Activated CD4-positive, alpha-beta T cell treated with anti-CD3 and anti-CD28 coated beads for 36 hours (primary cell): ENCODE measurements at regions of chr15 and their contacts with region 1.

Region 1: GRCh38 chr15:44711356-44712107 is at the start of gene B2M:
- DNase-seq: peak; percentile 97
- ATAC-seq: peak; percentile 78
- H3K4me3 Mint-ChIP-seq: peak within 1 kb of the TSS; percentile 96
- H3K27ac Mint-ChIP-seq: peak within 1 kb of the TSS; percentile 100
- H3K4me1 Mint-ChIP-seq: peaks cover 34% of the 10 kb centered on the region
- H3K27me3 Mint-ChIP-seq: no peaks in the 10 kb centered on the region
- total RNA-seq, gene B2M: 5,181 to 7,416 TPM

Region 2: DNA sequence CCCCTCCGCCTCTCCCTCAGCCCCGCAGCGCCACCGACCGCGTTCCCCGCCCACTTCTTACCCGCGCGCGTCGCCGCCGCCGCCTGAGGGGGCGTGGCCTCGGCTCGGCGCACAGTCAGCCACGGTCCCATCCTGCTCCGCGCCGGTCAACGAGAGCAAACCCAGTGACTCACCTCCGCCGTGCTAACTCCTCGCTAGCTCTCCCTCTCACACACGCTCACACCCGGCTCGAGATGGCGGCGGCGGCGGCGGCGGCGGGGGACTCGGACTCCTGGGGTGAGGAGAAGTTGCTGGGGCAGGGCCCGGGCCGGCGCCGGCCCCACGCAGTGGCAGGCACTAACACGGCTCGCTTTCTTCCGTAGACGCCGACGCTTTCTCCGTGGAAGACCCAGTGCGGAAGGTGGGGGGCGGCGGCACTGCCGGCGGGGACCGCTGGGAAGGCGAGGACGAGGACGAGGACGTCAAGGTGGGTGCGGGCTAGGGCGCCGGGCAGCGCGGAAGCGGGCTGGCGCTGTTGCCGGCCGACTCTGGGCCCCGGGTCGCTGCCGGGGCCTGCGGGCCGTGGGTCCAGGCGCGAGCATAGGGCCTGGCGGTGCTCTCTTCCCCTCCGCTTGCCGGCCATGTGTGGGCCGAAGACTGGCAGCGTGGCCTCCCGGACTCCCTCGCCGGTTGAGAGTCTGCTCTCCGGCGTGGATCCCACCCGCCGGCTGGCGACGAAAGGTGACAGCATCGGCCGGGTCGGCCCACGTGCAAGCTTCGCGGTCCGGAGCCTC is 174.4 kb before region 1 on chr15 and contains the start of gene EIF3J:
- CTCF ChIA-PET with region 1: no interaction called
- POLR2A ChIA-PET with region 1: interaction called, 7 read pairs
- intact Hi-C with region 1: loop called in 1 of 2 experiments (anchors 2 kb)
- DNase-seq: peak; percentile 97
- ATAC-seq: peak; percentile 95
- H3K4me3 Mint-ChIP-seq: peak within 1 kb of the TSS; percentile 75
- H3K27ac Mint-ChIP-seq: peak within 1 kb of the TSS; percentile 95
- H3K4me1 Mint-ChIP-seq: peaks cover 45% of the 10 kb centered on the region
- H3K27me3 Mint-ChIP-seq: no peaks in the 10 kb centered on the region
- total RNA-seq, gene EIF3J: 106 to 143 TPM

Region 3: DNA sequence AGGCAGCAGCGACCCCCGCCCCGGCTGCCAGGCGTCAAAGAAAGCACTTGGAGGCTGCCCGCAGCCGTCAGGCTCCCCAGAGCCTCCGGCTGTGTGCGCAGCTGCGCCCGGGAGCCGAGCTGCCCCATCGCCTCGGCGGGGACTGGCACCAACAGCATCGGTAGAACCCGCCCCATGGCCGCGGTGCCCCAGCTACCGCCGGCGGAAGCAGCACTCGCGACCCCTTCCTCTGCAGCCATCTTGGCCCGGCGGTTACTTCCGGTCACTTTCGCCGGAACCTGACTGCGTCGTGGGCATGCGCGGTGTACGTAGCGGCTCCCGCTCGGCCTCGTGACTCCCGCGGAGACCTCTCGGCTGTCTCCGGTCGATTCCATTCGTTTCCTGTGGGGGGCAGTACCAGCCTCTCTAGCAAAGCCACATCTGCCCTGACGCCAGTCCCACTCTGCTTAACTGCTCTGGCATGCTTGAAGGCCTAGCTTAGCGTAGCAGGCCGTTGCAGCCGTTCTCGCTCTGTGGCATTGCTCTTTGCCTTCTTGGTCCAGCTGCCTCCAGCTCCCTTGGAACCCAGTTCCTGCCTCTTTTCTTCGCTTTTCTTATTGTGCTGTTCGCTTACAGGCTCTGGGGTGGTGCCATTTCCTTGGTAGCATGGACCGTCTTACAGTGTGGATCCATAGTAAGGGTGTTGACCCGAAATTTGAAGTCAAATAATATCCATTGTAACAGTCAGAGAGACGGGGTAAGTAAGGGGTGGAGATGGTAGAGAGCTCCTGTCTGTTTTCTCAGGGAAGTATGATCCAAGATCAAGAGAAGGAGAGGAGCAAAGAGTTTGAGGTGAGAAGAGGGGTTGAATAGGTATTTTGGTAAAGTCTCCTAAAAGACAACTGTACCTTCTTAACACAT is 47.9 kb before region 1 on chr15 and contains the start of gene SPG11:
- CTCF ChIA-PET with region 1: interaction called, 209 read pairs
- POLR2A ChIA-PET with region 1: interaction called, 274 read pairs
- intact Hi-C with region 1: loop called (anchors 1 kb)
- DNase-seq: peak; percentile 99
- ATAC-seq: peak; percentile 83
- H3K4me3 Mint-ChIP-seq: peak within 1 kb of the TSS; percentile 96
- H3K27ac Mint-ChIP-seq: peak within 1 kb of the TSS; percentile 98
- H3K4me1 Mint-ChIP-seq: peaks cover 57% of the 10 kb centered on the region
- H3K27me3 Mint-ChIP-seq: no peaks in the 10 kb centered on the region
- total RNA-seq, gene SPG11: 76.2 to 88.7 TPM

Region 4: GRCh38 chr15:44676676-44677075 is 34.9 kb before region 1 on chr15:
- CTCF ChIA-PET with region 1: interaction called, 8 read pairs
- POLR2A ChIA-PET with region 1: interaction called, 26 read pairs
- intact Hi-C with region 1: no loop called
- DNase-seq: peak; percentile 67
- ATAC-seq: peak; percentile 68
- H3K4me3 Mint-ChIP-seq: peak overlapping the region; percentile 41
- H3K27ac Mint-ChIP-seq: peak overlapping the region; percentile 89
- H3K4me1 Mint-ChIP-seq: peaks cover 83% of the 10 kb centered on the region
- H3K27me3 Mint-ChIP-seq: no peaks in the 10 kb centered on the region

Region 5: GRCh38 chr15:44694416-44694815 is 17.1 kb before region 1 on chr15:
- CTCF ChIA-PET with region 1: interaction called, 4 read pairs
- POLR2A ChIA-PET with region 1: interaction called, 12 read pairs
- intact Hi-C with region 1: no loop called
- DNase-seq: no peak
- ATAC-seq: no peak
- H3K4me3 Mint-ChIP-seq: no peak overlapping the region
- H3K27ac Mint-ChIP-seq: no peak overlapping the region
- H3K4me1 Mint-ChIP-seq: peaks cover 13% of the 10 kb centered on the region
- H3K27me3 Mint-ChIP-seq: no peaks in the 10 kb centered on the region

Region 6: DNA sequence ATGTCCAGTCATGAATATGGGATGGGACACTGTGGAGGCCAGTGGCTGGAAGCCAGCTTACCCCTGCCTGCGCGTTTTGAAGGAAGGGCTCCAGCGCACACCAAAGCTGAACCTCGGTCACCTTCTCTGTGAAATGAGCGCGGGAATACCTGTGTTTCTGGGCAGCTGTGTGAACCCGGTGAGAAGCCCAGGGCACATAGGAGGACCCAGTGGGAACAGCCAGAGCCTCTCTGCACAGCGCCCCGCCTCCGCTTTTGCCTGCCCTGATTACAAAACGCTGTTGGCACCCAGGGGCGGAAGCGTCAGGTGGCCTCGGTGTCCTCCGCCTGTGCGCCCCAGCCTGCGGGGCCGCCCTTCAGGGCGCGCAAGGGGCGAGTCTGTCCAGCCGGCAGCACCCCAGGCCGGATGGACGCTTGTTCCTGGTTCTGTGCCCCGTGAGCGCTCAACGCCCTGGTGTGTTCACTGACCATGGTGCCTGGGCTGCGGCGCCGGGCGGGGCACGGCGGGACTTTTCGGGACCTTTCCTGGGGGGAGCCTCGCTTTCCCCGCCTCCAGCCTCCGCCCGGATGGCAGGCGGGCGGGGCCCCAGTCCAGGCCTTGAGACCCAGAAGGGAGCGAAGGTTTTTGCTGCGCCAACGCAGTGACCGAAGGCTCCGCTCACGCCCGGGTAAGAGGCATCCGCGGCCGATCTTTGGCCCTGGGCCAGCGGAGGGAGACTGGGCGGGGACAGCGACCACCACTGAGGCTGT is 923.1 kb after region 1 on chr15 and contains the start of gene SQOR:
- CTCF ChIA-PET with region 1: no interaction called
- POLR2A ChIA-PET with region 1: no interaction called
- intact Hi-C with region 1: loop called in 1 of 2 experiments (anchors 5 kb)
- DNase-seq: peak; percentile 86
- ATAC-seq: peak; percentile 66
- H3K4me3 Mint-ChIP-seq: peak within 1 kb of the TSS; percentile 96
- H3K27ac Mint-ChIP-seq: peak within 1 kb of the TSS; percentile 90
- H3K4me1 Mint-ChIP-seq: peaks cover 32% of the 10 kb centered on the region
- H3K27me3 Mint-ChIP-seq: no peaks in the 10 kb centered on the region
- total RNA-seq, gene SQOR: 105 to 108 TPM